K562 (cell line): ENCODE measurements at regions of chr7 and their contacts with region 1.

Region 1: DNA sequence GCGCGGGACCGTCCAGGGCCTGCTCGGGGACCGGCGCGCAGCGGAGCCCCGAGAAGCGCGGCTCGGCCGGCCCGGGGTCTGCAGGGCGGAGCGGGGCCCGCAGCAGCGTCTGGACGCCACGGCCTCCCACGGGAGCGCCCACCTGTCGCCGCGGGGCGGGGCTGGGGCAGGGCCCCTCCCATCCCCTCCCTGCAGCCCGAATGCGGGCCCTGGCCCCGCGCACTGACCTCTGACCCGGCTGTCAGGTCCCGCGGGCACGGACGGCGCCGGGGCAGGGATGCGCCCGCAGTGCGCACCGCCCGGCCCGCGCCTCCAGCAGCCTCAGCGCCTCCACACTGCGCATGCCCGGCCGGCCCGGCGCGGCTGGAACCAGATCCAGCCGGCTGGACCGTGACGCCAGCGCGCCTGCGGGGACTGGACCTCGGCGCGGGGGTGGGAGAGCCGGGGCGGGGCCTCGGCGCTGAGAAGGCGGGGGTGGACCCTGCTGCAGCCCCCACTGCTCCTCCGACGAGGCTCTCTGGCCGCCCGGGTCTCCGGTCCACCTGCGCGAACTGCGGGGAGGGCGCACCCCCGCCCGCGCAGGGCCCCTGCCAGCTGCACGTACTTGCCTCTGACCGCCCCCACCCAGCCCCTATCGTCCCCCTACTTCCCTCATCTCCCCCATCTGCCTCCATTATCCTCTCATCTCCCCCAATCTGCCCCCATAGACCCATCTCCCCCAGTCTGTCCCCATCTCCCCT is 16.1 kb upstream of the GPR146 start:
- DNase-seq: peak; percentile 94 to 98 (median 97)
- ATAC-seq: peak; percentile 94
- H3K4me3 ChIP-seq: peak overlapping the region; percentile 72
- H3K27ac ChIP-seq: peak overlapping the region; percentile 88
- H3K4me1 ChIP-seq: peaks cover 13 to 82% of the 10 kb centered on the region in 2 experiments
- H3K27me3 ChIP-seq: no peaks in the 10 kb centered on the region
- CTCF ChIP-seq: no peak
- EP300 ChIP-seq: no peak
- POLR2A ChIP-seq: no peak
- RAD21 ChIP-seq: no peak

Region 2: DNA sequence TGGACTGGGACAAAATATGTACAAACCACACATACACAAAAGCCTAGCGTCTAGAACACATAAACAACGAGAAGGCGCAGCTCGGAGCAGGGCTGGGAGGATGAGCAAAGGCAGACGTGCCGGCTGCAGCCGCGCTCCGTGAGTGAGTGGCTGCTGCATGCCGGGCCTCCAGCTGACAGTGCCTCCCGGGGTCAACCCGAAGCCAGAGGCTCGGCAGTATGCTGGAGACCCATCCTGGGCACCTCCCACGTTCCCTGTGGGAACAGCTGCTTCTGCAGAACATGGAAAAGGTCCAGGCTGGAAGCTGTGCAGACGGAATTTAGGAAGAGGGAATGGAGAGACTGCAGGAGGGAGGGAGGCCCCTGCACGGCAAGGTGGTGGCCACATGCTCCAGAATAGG is 12.6 kb after region 1 on chr7:
- CTCF ChIA-PET with region 1: no interaction called
- POLR2A ChIA-PET with region 1: interaction called, 13 read pairs
- in situ Hi-C with region 1: no loop called
- intact Hi-C with region 1: no loop called
- DNase-seq: peak in 2 of 4 experiments; percentile 37 to 52
- ATAC-seq: peak; percentile 13
- H3K4me3 ChIP-seq: no peak overlapping the region
- H3K27ac ChIP-seq: 0 out of 3 replicates have a peak overlapping the region, but pooled peaks have one; percentile 28
- H3K4me1 ChIP-seq: peaks cover 43 to 51% of the 10 kb centered on the region in 2 experiments
- H3K27me3 ChIP-seq: no peaks in the 10 kb centered on the region
- CTCF ChIP-seq: no peak
- EP300 ChIP-seq: no peak
- POLR2A ChIP-seq: no peak
- RAD21 ChIP-seq: no peak

Region 3: DNA sequence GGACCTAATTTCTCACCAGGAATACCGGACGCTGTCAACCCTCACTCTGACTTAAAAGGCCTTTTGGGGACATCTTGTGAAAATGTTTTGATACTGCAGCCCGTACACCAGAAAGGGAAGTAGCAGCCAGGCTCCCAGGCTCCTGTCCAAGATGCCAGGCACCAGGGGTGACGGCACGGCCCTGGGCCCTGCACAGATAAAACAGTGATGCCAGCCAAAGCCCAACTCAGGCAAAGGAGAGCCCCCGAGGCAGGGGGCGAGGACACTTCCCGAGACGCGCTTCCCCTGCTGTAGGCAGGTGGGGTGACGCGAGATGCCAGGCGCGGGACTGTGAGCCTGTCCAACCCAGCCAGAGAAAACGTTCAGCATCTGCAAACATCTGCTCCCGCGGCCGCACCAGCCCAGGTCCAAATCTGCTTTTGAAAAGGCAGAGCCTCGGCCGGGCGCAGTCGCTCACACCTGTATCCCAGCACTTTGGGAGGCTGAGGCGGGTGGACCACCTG is 116.1 kb after region 1 on chr7:
- CTCF ChIA-PET with region 1: no interaction called
- POLR2A ChIA-PET with region 1: no interaction called
- in situ Hi-C with region 1: no loop called
- intact Hi-C with region 1: no loop called
- DNase-seq: peak in 1 of 4 experiments; percentile 13
- ATAC-seq: peak; percentile 73
- H3K4me3 ChIP-seq: no peak overlapping the region
- H3K27ac ChIP-seq: no peak overlapping the region
- H3K4me1 ChIP-seq: peaks cover 3 to 8% of the 10 kb centered on the region in 2 experiments; a peak in 4 of 5 replicates
- H3K27me3 ChIP-seq: no peaks in the 10 kb centered on the region
- CTCF ChIP-seq: peak; percentile 35 to 61 (median 46); a peak in 5 of 6 replicates
- EP300 ChIP-seq: no peak
- POLR2A ChIP-seq: no peak
- RAD21 ChIP-seq: peak; percentile 34 to 47; a peak in 3 of 4 replicates

Region 4: GRCh38 chr7:2299131-2299829 is 1271.1 kb after region 1 on chr7:
- CTCF ChIA-PET with region 1: no interaction called
- POLR2A ChIA-PET with region 1: no interaction called
- in situ Hi-C with region 1: no loop called
- intact Hi-C with region 1: no loop called
- DNase-seq: peak in 1 of 4 experiments; percentile 12
- ATAC-seq: no peak
- H3K4me3 ChIP-seq: no peak overlapping the region
- H3K27ac ChIP-seq: no peak overlapping the region
- H3K4me1 ChIP-seq: peaks cover 25 to 44% of the 10 kb centered on the region in 2 experiments; a peak in 4 of 5 replicates
- H3K27me3 ChIP-seq: no peaks in the 10 kb centered on the region
- CTCF ChIP-seq: no peak
- EP300 ChIP-seq: no peak
- POLR2A ChIP-seq: no peak
- RAD21 ChIP-seq: no peak